Pancreas (tissue), 10 donors: ENCODE measurements at regions of chr3 and their contacts with region 1.

Region 1: DNA sequence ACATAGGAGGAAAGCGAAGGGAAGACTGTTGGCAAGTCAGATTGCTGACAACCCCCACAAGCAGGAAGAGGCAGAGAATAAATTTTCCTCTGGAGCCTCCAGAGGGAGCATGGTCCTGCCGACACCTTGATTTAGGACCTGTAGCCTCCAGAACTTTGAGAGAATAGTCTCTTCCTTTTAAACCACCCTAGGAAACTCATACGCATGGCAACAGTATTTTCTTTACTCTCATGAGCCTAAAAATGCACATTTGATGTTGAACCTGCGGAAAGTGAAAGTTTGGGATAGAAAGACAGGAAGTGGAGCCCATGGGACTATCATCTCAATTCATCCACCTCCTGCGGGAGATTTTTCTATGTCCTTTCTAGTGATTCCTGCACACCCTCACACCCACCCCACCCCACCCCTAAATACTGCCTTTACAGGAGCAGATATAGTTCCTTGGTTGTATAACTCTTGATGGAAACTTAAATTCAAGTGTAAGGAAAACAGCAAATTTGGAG is 116.7 kb upstream of the LPP start:
- DNase-seq: peak in 4 of 6 donors; percentile 46 to 59 (median 54)
- ATAC-seq: peak; percentile 82 to 93 (median 86)
- H3K4me3 ChIP-seq: no peak overlapping the region
- H3K27ac ChIP-seq: peak overlapping the region; percentile 8 to 66 (median 48)
- H3K4me1 ChIP-seq: peaks cover 0 to 18% (median 10%) of the 10 kb centered on the region in 3 donors
- H3K27me3 ChIP-seq: no peaks in the 10 kb centered on the region
- CTCF ChIP-seq: peak in 3 of 4 donors; percentile 29 to 35 (median 35)

Region 2: GRCh38 chr3:188133219-188133618 is 96.0 kb after region 1 on chr3:
- intact Hi-C with region 1: no loop called
- DNase-seq: no peak
- ATAC-seq: no peak
- H3K4me3 ChIP-seq: no peak overlapping the region
- H3K27ac ChIP-seq: no peak overlapping the region
- H3K4me1 ChIP-seq: no peaks in the 10 kb centered on the region
- H3K27me3 ChIP-seq: no peaks in the 10 kb centered on the region
- CTCF ChIP-seq: no peak

Region 3: GRCh38 chr3:188148318-188148717 is 111.1 kb after region 1 on chr3:
- intact Hi-C with region 1: no loop called
- DNase-seq: no peak
- ATAC-seq: no peak
- H3K4me3 ChIP-seq: no peak overlapping the region
- H3K27ac ChIP-seq: no peak overlapping the region
- H3K4me1 ChIP-seq: peaks cover 0 to 5% (median 0%) of the 10 kb centered on the region in 3 donors
- H3K27me3 ChIP-seq: no peaks in the 10 kb centered on the region
- CTCF ChIP-seq: no peak

Region 4: DNA sequence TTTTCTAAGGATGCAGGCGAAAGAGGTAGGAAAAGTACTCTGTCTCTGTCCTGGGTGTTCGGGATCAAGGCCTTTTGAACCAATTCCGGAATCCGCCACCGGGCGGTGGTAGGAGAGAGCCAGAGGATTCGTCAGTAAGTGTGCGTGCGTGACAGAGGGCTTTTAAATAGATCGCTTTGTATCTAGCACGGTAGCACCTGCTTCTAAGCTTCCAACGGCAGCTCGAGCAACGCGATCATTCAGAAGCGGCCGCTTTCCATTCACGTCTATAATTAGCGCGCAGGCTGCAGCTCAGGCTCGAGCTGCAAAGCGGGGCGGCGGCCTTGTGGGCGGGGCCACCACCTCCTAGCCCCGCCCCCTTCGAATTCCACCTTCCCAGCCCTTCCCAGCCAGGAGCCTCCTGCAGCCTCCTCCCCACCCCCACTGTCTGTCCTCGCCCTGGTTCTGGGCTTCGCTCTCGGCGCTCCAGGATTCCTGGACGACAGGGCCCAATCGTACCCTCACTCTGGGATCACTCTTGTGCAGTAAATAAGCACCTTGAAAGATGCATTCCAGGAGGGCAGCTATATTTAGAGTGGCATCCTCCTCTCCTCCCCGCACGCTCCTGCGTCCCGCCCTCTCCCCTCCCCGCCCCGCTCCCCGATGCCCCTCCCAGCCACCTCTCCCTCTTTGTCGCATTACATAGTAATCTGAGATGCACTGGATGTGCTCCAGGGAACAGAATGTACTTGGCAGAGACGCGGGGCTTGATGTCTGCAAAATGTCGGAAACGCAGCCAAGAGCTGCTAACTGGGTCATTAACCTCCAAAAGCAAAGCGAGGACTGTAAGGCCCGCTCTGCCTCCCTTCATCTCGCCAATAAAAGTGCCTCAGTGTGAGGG is 910.4 kb after region 1 on chr3:
- intact Hi-C with region 1: loop called in 1 of 3 experiments (anchors 10 kb)
- DNase-seq: peak; percentile 89 to 98 (median 96)
- ATAC-seq: peak; percentile 84 to 89 (median 87)
- H3K4me3 ChIP-seq: peak overlapping the region; percentile 20 to 49 (median 30)
- H3K27ac ChIP-seq: peak overlapping the region; percentile 89 to 94 (median 92)
- H3K4me1 ChIP-seq: peaks cover 37 to 43% (median 38%) of the 10 kb centered on the region in 3 donors
- H3K27me3 ChIP-seq: no peaks in the 10 kb centered on the region
- CTCF ChIP-seq: peak in 3 of 4 donors; percentile 19 to 42 (median 26)